ENCODE measurements at regions of chr17 and their contacts with region 1.

Region 1: DNA sequence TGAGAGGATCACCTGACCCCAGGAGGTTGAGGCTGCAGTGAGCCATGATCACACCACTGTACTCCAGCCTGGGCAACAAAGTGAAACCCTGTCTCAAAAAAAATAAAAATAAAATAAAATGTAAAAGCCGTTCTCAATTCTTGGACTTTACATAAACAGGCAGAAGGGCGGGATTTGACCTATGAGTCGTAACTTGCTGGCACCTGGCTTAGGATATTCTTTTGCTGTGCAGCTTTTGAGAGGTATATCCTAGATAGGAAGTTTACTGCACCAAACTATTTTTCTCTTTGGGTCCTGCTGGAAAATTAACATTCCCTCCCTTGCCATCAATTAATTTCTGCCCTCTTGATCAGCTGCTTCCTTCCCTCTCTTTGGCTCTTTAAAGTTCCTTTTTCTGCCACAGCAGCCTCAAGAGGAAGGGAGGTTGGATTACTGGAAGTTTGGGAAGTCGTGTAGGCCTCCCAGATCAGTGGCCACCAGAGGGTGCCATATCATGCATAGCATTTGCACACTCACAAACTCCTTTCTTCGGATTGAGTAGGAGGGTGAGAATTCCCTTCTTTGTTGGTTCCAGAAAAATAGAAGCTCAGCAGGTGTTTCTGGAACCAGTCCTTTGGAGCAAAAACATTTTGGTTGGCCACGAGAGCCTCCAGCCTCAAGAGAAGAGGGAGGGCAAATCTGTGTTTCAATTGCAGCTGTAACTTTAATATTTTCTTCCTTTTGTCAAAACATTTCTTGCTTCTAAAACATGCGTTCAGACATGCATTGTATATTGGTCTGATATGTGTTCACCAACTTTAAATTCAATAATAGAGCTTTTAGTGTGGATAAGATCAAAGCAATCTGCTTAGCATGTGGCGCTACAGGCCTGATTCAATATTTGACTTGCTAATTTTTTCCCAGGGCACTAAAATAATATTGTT is 147.3 kb downstream of the CCDC182 start:
- DNase-seq: peak; percentile 70
- H3K4me3 Mint-ChIP-seq: no peak overlapping the region
- H3K27ac Mint-ChIP-seq: peak overlapping the region; percentile 29
- H3K4me1 Mint-ChIP-seq: peaks cover 8% of the 10 kb centered on the region
- H3K27me3 Mint-ChIP-seq: no peaks in the 10 kb centered on the region
- CTCF ChIP-seq: peak; percentile 55

Region 2: GRCh38 chr17:57130761-57131461 is 466.9 kb before region 1 on chr17:
- CTCF ChIA-PET with region 1: interaction called, 3 read pairs
- POLR2A ChIA-PET with region 1: no interaction called
- intact Hi-C with region 1: loop called (anchors 5 kb)
- DNase-seq: peak; percentile 89
- H3K4me3 Mint-ChIP-seq: no peak overlapping the region
- H3K27ac Mint-ChIP-seq: no peak overlapping the region
- H3K4me1 Mint-ChIP-seq: peaks cover 5% of the 10 kb centered on the region
- H3K27me3 Mint-ChIP-seq: no peaks in the 10 kb centered on the region
- CTCF ChIP-seq: peak; percentile 85

Region 3: DNA sequence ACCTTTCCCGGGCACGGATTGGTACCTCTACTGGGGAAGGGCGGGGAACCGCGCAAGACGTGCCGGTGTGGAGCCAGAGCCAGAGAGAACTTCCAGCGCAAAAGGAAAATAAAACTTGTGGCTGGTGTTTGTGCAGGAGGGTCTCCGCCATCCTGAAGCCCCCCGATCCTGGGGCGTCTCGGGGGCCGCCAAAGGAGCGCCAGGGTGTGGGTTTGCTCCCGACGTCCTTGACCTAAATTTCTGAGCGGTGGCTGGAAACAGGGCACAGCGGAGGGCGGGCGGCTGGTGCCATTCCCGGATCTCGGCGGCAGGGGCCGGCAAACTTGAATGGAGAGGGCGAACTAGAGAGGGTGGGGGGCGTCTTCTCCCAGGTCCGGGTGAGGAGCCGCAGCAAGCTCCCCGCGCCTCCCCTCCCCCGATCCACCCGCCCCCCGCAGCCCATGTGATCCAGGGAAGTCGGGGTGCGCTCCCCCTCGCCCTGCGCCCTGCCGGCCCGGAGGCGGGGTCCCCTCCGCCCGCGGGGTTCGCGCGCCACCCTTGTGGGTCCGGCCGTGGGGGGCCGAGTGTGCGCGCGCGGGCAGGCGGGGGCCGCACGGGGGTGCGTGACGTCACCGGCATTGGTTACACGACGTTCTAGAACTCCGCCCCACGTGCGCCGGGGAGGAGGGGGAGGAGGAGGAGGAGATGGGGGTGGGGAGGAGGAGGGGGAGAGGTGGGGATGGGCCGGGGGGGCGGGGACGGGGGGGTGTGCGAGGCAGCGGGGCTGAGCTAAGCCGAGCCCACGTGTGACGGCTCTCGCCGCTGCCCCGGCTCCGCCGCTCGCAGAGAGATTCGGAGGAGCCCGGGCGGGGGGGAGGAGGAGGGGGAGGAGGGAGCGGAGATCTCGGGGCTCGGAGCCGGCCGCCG is 341.8 kb before region 1 on chr17 and contains the start of gene MSI2:
- CTCF ChIA-PET with region 1: no interaction called
- POLR2A ChIA-PET with region 1: no interaction called
- intact Hi-C with region 1: loop called (anchors 5 kb)
- DNase-seq: peak; percentile 83
- H3K4me3 Mint-ChIP-seq: peak within 1 kb of the TSS; percentile 96
- H3K27ac Mint-ChIP-seq: peak within 1 kb of the TSS; percentile 89
- H3K4me1 Mint-ChIP-seq: peaks cover 18% of the 10 kb centered on the region
- H3K27me3 Mint-ChIP-seq: no peaks in the 10 kb centered on the region
- CTCF ChIP-seq: no peak
- total RNA-seq, gene MSI2: 52.4 and 60.6 TPM in 2 replicates

Region 4: GRCh38 chr17:57451643-57452324 is 146.0 kb before region 1 on chr17:
- CTCF ChIA-PET with region 1: no interaction called
- POLR2A ChIA-PET with region 1: no interaction called
- intact Hi-C with region 1: no loop called
- DNase-seq: no peak
- H3K4me3 Mint-ChIP-seq: no peak overlapping the region
- H3K27ac Mint-ChIP-seq: peak overlapping the region; percentile 49
- H3K4me1 Mint-ChIP-seq: no peaks in the 10 kb centered on the region
- H3K27me3 Mint-ChIP-seq: no peaks in the 10 kb centered on the region
- CTCF ChIP-seq: no peak

Region 5: GRCh38 chr17:57577751-57578607 is 19.8 kb before region 1 on chr17:
- CTCF ChIA-PET with region 1: interaction called, 16 read pairs
- POLR2A ChIA-PET with region 1: no interaction called
- intact Hi-C with region 1: no loop called
- DNase-seq: peak; percentile 90
- H3K4me3 Mint-ChIP-seq: peak overlapping the region; percentile 67
- H3K27ac Mint-ChIP-seq: peak overlapping the region; percentile 83
- H3K4me1 Mint-ChIP-seq: peaks cover 26% of the 10 kb centered on the region
- H3K27me3 Mint-ChIP-seq: no peaks in the 10 kb centered on the region
- CTCF ChIP-seq: no peak

Region 6: DNA sequence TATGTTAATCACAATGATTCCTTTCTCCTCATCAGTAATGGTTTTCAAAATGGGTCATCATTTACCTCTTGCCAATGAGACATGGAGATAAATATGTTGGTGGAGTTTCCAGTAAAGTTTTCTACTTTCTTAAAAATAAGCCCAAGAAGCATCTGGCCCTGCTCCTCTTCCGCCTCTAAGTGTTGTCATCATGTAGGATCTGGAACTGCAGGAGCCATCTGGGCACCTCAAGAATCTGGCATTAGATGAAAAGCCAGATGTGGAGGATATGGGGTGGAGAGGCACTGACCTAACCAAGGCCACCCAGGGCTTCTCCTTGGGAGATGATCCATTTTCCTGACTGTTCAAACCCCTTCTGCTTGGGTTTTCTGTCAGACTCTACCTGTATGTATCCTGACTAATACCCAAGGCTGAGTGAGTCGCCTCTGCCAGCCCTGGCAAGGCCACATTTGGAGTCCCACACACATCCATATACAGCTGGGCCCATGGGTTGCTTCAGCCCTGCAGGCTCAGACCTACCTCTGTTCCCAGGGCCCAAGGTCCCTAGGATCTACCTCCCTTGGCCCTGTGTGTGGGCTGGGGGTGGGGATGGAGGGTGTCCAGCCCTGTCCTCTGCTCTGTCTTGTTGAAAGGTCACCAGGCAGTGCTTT is 122.7 kb after region 1 on chr17:
- CTCF ChIA-PET with region 1: no interaction called
- POLR2A ChIA-PET with region 1: no interaction called
- intact Hi-C with region 1: no loop called
- DNase-seq: no peak
- H3K4me3 Mint-ChIP-seq: no peak overlapping the region
- H3K27ac Mint-ChIP-seq: no peak overlapping the region
- H3K4me1 Mint-ChIP-seq: no peaks in the 10 kb centered on the region
- H3K27me3 Mint-ChIP-seq: peaks cover 40% of the 10 kb centered on the region
- CTCF ChIP-seq: no peak

Region 7: DNA sequence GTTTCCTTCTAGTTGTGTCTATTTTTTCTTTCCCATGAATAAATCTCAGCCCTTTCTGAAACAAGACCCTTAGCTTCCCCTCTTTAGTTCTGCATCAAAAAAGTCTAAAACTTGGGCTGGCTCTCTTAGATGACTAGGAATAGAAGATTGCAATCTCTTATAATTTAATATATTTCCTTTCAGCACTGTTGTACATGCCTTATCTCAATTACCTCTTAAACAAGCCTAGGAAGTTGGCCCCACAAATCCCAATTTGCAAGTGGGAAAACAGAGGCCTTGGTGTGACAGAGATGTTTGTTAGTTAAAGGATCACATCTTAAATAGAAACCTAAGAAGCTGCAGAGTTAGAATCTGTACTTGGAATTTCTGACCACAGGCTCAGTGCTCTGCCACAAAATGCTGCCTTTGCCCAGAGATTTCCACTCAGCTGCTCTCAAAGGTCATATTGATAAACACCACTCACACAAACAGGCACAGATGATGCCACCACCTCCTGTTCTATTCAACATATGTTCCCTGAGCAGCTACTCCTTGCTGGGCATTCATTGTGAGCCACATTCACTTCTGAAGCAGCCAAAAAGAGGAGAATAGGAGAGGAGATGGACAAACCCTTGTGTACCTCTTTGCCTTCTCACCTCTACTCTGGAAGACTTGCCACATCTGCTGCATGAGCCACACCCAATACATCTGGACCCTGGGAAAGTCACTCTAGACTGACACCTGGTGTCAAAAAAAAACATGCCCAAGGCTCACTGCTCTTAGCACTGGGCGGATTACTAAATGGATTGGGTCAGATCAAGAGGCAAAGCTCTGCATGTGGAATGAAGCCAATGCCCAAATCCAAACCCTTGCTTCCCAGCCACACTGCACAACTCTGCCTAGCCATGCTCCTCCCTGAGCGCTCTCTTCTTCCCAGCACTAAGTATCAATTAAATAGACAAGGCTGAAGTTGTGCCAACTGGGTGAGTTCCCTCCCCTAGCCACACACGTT is 141.9 kb after region 1 on chr17:
- CTCF ChIA-PET with region 1: interaction called, 6 read pairs
- POLR2A ChIA-PET with region 1: interaction called, 3 read pairs
- intact Hi-C with region 1: loop called (anchors 5 kb)
- DNase-seq: peak; percentile 59
- H3K4me3 Mint-ChIP-seq: no peak overlapping the region
- H3K27ac Mint-ChIP-seq: no peak overlapping the region
- H3K4me1 Mint-ChIP-seq: no peaks in the 10 kb centered on the region
- H3K27me3 Mint-ChIP-seq: peaks cover 43% of the 10 kb centered on the region
- CTCF ChIP-seq: peak; percentile 44

Region 8: GRCh38 chr17:57833179-57833939 is 235.6 kb after region 1 on chr17:
- CTCF ChIA-PET with region 1: interaction called, 16 read pairs
- POLR2A ChIA-PET with region 1: no interaction called
- intact Hi-C with region 1: no loop called
- DNase-seq: peak; percentile 70
- H3K4me3 Mint-ChIP-seq: no peak overlapping the region
- H3K27ac Mint-ChIP-seq: no peak overlapping the region
- H3K4me1 Mint-ChIP-seq: peaks cover 15% of the 10 kb centered on the region
- H3K27me3 Mint-ChIP-seq: no peaks in the 10 kb centered on the region
- CTCF ChIP-seq: peak; percentile 78

Measured in MCF 10A (cell line).